ENCODE measurements at regions of chr1 and their contacts with region 1.

Region 1: DNA sequence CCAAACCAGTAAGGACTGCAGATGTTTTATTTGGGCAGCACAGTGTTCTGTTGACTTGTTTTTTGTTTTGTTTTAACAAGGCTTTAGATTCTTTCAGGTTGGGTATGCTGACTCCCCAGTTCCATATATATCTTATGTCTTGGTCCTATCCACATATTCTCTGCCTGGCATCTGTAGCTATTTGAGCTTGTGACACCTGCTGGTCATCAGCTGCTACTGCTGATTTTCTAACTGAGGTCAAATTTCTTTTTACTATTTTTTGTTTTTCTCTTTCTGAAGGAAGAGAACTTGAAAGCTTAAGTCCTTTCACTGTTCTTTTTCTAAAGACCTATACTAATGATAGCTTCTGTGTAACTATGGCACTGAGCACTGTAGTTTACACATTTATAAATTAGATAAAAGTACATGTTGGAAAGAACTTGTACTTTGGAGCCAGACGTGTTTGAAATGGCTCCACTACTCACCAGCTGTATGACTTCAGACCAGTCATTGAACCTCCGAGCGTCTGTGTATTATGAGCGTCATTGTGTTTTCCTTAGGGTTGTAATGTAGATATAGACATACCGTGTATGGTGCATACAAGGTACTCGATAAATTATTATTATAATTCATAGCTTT is 109.4 kb downstream of the NRDC start:
- H3K4me3 ChIP-seq: no peak overlapping the region
- H3K27ac ChIP-seq: no peak overlapping the region
- H3K4me1 ChIP-seq: no peaks in the 10 kb centered on the region
- CTCF ChIP-seq: peak; percentile 57; the same call in 1 of the 2 replicates

Region 2: GRCh38 chr1:51526248-51526647 is 242.8 kb before region 1 on chr1:
- CTCF ChIA-PET with region 1: no interaction called
- POLR2A ChIA-PET with region 1: no interaction called
- H3K4me3 ChIP-seq: no peak overlapping the region
- H3K27ac ChIP-seq: no peak overlapping the region
- H3K4me1 ChIP-seq: no peaks in the 10 kb centered on the region
- CTCF ChIP-seq: no peak

Region 3: DNA sequence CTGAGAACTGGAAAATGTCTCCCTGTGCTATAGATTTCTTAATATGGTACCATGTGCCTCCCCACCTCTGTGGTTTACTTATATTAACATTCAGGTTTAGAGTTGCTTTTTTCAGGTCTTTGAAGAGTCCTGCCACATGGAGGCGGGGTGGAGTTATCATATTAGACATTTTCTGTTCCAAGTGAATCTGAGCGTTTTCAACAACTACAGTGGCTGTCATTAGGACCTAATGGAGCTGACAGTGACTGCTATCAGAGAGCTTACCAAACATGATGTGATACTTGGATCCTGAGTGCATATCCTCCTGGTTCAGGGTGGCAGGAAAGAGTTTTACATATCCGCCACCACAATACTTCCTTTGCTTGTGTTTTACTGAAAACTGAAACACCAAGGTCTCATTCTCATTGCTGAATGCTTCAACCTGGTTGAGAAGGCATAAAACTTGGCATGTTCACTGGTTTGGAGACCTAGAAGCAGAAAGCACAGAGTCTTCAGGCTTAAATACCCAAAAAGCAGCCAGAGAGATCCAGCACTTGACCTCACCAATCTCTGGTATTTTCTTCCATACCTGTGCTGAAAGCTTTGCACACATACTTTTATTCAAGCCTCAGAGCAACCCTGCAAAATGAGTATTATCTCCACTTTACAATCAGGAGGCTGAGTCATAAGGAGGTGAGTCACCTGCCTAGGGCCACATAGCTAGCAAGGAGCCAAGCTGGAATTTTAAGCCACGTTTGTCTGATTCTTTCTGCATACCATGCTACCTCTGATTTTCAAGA is 199.6 kb before region 1 on chr1:
- CTCF ChIA-PET with region 1: interaction called, 10 read pairs
- POLR2A ChIA-PET with region 1: no interaction called
- H3K4me3 ChIP-seq: no peak overlapping the region
- H3K27ac ChIP-seq: peak overlapping the region; percentile 3; the same call in 1 of the 2 replicates
- H3K4me1 ChIP-seq: peaks cover 5% of the 10 kb centered on the region; the same call in 1 of the 2 replicates
- CTCF ChIP-seq: peak; percentile 51; the same call in 1 of the 2 replicates

Region 4: DNA sequence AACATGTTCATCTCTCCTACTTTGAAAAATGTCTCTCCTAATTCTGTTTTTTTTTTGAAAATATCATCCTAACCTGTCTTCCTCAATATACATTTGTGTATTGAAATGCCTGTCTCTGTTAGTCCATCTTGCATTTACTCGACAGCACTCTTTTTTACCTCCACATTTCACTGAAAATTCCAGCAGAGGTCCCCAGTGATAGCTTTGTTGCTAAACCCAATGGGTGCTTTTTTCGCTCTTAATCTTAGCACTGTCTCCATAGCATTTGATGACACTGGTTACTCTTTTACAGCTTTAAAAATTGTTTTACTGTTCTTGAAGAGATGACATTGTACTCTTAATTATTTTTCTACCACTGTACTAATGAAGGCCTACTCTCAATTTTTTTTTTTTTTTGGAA is 141.4 kb before region 1 on chr1:
- CTCF ChIA-PET with region 1: interaction called, 15 read pairs
- POLR2A ChIA-PET with region 1: interaction called, 5 read pairs
- H3K4me3 ChIP-seq: no peak overlapping the region
- H3K27ac ChIP-seq: no peak overlapping the region
- H3K4me1 ChIP-seq: peaks cover 11% of the 10 kb centered on the region
- CTCF ChIP-seq: no peak; the same call in 1 of the 2 replicates

Region 5: GRCh38 chr1:51690285-51690961 is 78.7 kb before region 1 on chr1:
- CTCF ChIA-PET with region 1: interaction called, 10 read pairs
- POLR2A ChIA-PET with region 1: no interaction called
- H3K4me3 ChIP-seq: no peak overlapping the region
- H3K27ac ChIP-seq: peak overlapping the region; percentile 26; the same call in 1 of the 2 replicates
- H3K4me1 ChIP-seq: peaks cover 31% of the 10 kb centered on the region
- CTCF ChIP-seq: no peak

Region 6: GRCh38 chr1:51753969-51754368 is 15.1 kb before region 1 on chr1:
- CTCF ChIA-PET with region 1: interaction called, 10 read pairs
- POLR2A ChIA-PET with region 1: no interaction called
- H3K4me3 ChIP-seq: no peak overlapping the region
- H3K27ac ChIP-seq: no peak overlapping the region
- H3K4me1 ChIP-seq: no peaks in the 10 kb centered on the region
- CTCF ChIP-seq: no peak

Measured in HEK293 (cell line).